ENCODE measurements at regions of chr6 and their contacts with region 1.

Region 1: GRCh38 chr6:36678518-36679027 is at the start of gene CDKN1A:
- DNase-seq: peak; percentile 96
- ATAC-seq: peak; percentile 88
- total RNA-seq, gene CDKN1A: 63.8 TPM

Region 2: GRCh38 chr6:36423101-36423824 is 255.3 kb before region 1 on chr6:
- intact Hi-C with region 1: loop called (anchors 2 kb)
- DNase-seq: peak; percentile 100
- ATAC-seq: peak; percentile 100

Region 3: DNA sequence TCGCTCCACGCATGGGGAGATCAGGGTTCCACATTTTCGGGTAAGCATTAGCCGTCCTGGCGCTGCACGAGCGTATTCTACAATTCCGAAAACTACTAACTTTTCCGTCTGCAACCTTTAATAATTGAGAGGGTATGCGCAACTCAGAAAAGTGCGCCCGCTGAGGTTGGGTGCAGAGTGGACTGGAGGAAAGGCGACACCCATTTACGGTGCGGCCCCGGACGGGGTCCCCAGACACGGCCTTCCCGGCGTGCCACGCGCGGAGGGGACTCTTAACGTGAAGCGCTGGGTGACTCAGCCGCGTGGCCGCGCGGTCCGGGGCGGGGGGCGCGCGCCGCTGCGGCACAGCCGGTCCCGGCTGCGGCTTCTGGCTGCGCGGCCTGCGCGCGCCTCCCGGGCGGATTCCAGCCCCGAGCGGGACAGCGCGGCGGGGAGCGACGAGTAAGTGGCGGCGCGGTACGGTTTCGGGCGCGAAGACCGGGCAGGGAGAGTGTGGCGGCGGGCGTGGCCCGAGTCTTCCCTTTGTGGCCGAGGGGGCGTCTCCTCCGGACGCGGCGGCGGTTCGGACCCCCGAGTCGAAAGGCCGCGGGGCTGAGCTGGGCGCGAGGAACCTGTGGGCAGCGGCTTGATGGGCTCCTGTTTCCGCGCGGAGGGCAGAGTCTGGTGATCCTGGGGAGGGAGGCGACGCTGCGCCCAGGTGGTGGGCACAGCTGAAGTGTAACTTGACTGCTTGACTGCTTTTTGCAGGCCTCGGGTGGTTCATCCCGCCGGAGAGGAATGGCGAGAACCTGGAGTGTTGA is 235.7 kb before region 1 on chr6 and contains the starts of genes KCTD20 and PXT1:
- intact Hi-C with region 1: loop called (anchors 5 kb)
- DNase-seq: peak; percentile 96
- ATAC-seq: peak; percentile 92
- total RNA-seq, gene KCTD20: 26.4 TPM
- total RNA-seq, gene PXT1: not detected

Region 4: DNA sequence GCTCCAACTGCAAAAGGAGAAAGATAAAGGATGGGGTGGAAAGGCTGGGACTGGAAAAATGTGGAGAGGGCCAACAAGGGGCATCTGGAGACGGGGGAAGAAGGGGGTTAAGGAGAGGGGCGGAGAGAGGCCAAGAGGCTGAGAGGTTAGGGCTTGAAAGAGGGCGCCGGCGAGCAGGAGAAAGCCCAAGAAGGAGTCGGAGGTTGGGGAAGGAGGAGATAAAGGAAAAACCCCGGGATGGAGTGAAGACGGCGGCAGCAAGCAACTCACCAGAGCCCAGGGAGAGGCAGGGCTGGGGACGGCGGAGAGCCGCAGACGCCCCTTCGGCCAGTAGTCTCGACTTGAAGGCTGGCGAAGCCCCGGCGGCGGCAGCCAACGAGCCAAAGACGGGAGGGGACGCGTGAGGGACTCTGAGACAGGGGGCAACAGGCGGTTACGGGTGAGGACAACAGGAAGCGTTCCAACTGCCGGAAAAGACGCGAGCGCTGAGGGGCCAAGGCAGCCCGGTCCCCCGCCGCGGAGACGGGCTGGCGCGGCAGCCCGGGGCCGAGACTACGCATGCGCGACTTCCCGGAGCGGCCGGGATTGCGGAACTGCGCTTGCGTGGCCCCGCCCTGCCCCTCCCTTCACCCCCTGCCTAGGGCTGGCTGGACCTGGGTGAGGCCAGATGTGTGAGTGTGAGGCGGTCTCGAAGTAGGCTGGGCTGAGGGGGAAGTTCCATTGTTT is 131.5 kb before region 1 on chr6 and contains the start of gene STK38:
- intact Hi-C with region 1: loop called (anchors 5 kb)
- DNase-seq: peak; percentile 94
- ATAC-seq: peak; percentile 98
- total RNA-seq, gene STK38: 22.6 TPM

Region 5: GRCh38 chr6:36623547-36624459 is 54.8 kb before region 1 on chr6:
- intact Hi-C with region 1: loop called (anchors 1 kb)
- DNase-seq: peak; percentile 90
- ATAC-seq: peak; percentile 33

Region 6: DNA sequence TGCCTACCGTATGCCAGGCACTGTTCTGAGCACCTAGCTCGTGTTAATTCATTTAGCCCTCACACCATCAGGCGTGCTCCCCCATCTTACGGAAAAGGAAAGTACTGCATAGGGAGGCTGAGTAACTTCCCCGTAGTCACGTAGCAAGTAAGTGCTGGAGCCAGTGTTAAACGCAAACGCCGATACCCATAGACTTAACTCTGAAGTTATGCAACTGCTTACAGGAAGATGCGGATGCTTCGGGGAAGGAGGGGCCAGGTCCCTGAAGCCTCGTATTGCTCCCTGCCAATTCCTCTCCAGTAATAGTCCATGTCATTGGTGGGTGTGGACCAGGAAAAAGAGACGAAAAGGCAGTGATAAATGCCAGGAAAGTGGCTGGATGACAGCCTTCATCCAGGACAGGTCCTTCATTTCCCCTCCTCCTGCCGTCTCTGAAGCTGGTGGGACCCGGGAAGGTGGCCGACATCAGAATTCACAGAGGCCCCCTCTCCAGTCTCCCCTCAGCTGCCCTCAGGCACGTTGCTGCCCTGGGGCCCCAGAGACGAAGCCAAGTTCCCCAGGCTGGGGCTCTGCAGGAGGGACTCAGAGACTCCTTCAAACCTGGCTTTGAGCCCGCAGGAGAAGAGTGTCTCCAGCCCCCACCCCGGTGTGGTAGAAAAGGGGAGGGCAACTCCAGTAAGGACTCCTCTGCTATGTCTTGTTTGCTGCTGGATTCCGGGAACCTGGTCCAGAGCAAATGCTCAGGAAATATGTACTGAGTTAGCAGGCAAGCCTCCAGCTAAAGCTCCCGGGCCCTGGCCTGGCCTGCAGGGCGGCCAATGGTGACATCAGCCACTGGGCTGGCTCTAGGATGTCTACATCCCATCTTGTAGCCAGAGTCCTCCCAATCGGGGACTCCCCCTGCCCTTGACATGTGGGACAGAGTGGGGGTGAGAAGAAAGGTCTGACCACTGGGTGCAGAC is 56.8 kb after region 1 on chr6:
- intact Hi-C with region 1: loop called (anchors 2 kb)
- DNase-seq: peak; percentile 88
- ATAC-seq: peak; percentile 92

Measured in Right ventricle myocardium inferior (tissue), 1 donor.